Activated CD4-positive, alpha-beta T cell treated with anti-CD3 and anti-CD28 coated beads, Interleukin-2, amount 10 ng/mL, durations not matched to agents 24 days and 14 days (primary cell): ENCODE measurements at regions of chr4 and their contacts with region 1.

Region 1: DNA sequence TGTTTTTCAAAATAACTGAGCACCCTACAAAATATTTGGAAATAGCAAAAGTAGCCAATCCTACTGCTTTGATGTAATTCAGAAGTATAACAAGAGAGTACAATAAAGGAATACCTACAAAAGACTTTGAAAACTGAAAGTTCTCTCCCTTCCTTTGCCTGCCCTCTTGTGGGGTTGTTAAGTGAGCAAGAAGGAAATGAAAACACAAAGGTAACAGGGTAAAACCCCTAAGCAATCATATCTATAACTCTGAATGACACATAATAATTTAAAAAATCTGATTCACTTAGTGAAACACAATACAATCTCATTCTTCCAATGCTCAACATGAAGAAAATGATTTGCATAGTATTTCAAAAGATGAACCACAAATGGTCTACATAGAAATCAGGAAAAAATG is 98.2 kb downstream of the FRYL start:
- DNase-seq: peak; percentile 68
- H3K4me3 Mint-ChIP-seq: no peak overlapping the region
- H3K27ac Mint-ChIP-seq: peak overlapping the region; percentile 42
- H3K4me1 Mint-ChIP-seq: peaks cover 24% of the 10 kb centered on the region
- H3K27me3 Mint-ChIP-seq: no peaks in the 10 kb centered on the region

Region 2: DNA sequence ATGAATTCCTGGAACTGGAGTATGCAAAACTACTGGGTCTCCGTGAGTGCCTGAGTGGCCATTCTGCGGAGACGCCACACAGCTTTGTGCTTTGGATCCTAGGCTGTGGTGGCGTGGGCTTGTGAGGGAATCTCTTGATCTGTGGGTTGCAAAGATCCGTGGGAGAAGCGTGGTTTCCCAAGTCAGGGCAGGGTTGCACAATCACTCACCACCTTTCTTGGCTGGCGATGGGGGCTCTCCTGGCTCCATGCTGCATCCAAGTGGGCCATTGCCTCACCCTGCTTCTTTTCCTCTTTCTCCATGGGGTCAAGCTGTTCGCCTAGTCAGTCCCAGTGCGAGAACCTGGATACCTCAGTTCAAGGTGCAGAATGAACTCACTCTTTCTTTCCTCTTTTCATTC is 278.1 kb before region 1 on chr4:
- intact Hi-C with region 1: no loop called
- DNase-seq: no peak
- H3K4me3 Mint-ChIP-seq: no peak overlapping the region
- H3K27ac Mint-ChIP-seq: no peak overlapping the region
- H3K4me1 Mint-ChIP-seq: peaks cover 20% of the 10 kb centered on the region
- H3K27me3 Mint-ChIP-seq: no peaks in the 10 kb centered on the region

Region 3: GRCh38 chr4:48578132-48578968 is 103.5 kb before region 1 on chr4:
- intact Hi-C with region 1: loop called (anchors 1 kb)
- DNase-seq: peak; percentile 85
- H3K4me3 Mint-ChIP-seq: no peak overlapping the region
- H3K27ac Mint-ChIP-seq: no peak overlapping the region
- H3K4me1 Mint-ChIP-seq: peaks cover 4% of the 10 kb centered on the region
- H3K27me3 Mint-ChIP-seq: no peaks in the 10 kb centered on the region

Region 4: GRCh38 chr4:48698029-48698971 is 16.4 kb after region 1 on chr4:
- intact Hi-C with region 1: loop called (anchors 1 kb)
- DNase-seq: no peak
- H3K4me3 Mint-ChIP-seq: no peak overlapping the region
- H3K27ac Mint-ChIP-seq: no peak overlapping the region
- H3K4me1 Mint-ChIP-seq: peaks cover 23% of the 10 kb centered on the region
- H3K27me3 Mint-ChIP-seq: no peaks in the 10 kb centered on the region